ENCODE measurements at regions of chr11 and their contacts with region 1.

Region 1: GRCh38 chr11:103682318-103683184 is 353.9 kb upstream of the DDI1 start:
- DNase-seq: peak in 4 of 5 donors; percentile 45 to 66 (median 61)
- H3K4me3 ChIP-seq: no peak overlapping the region
- H3K4me3 Mint-ChIP-seq: peak overlapping the region in 4 of 8 donors; percentile 10 to 45 (median 37)
- H3K27ac ChIP-seq: no peak overlapping the region
- H3K27ac Mint-ChIP-seq: no peak overlapping the region
- H3K4me1 ChIP-seq: peaks cover 3% of the 10 kb centered on the region
- H3K4me1 Mint-ChIP-seq: peaks cover 5 to 6% (median 5%) of the 10 kb centered on the region in 4 donors
- H3K27me3 ChIP-seq: no peaks in the 10 kb centered on the region
- H3K27me3 Mint-ChIP-seq: peaks cover 0 to 7% of the 10 kb centered on the region in 2 donors

Region 2: DNA sequence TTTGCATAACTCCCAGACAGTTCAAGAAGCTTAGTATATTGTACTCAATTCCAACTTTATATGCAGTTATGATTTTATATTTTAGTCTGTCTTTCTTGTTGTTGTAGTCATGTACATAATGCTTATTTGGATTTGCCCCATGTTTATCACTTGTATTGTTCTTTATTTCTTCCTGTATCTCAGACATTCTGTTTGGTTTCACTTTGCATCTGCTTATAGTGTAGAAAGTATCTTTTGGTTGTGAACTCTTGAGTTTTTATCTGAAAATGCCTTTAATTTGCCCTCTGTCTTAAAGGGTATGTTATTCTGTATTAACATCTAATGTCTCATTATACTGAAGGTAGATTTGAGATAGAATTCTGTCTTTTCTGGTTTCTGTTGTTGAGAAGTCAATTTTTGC is 297.9 kb before region 1 on chr11:
- CTCF ChIA-PET with region 1: no interaction called
- POLR2A ChIA-PET with region 1: no interaction called
- intact Hi-C with region 1: no loop called
- DNase-seq: no peak
- H3K4me3 ChIP-seq: no peak overlapping the region
- H3K4me3 Mint-ChIP-seq: no peak overlapping the region
- H3K27ac ChIP-seq: no peak overlapping the region
- H3K27ac Mint-ChIP-seq: no peak overlapping the region
- H3K4me1 ChIP-seq: no peaks in the 10 kb centered on the region
- H3K4me1 Mint-ChIP-seq: peaks cover 0 to 10% (median 6%) of the 10 kb centered on the region in 4 donors
- H3K27me3 ChIP-seq: no peaks in the 10 kb centered on the region
- H3K27me3 Mint-ChIP-seq: peaks cover 0 to 1% of the 10 kb centered on the region in 2 donors

Region 3: DNA sequence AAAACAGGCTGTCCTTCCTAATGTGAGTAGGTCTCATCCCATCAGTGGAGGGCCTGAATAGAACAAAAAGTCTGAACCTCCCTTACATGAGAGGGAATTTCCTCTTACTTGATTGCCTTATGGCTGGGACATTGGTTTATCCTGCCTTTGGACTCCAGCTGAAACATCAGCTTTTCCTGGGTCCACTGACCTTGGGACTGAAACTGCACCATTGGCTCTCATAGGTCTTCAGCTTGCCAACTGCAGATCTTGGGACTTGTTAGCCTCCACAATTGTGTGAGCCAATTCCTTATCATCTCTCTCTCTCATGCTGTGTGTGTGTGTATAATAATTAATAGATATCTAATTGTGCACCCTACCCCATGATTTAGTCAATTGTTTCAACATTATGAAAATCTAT is 21.4 kb before region 1 on chr11:
- CTCF ChIA-PET with region 1: no interaction called
- POLR2A ChIA-PET with region 1: no interaction called
- intact Hi-C with region 1: no loop called
- DNase-seq: no peak
- H3K4me3 ChIP-seq: no peak overlapping the region
- H3K4me3 Mint-ChIP-seq: no peak overlapping the region
- H3K27ac ChIP-seq: no peak overlapping the region
- H3K27ac Mint-ChIP-seq: no peak overlapping the region
- H3K4me1 ChIP-seq: no peaks in the 10 kb centered on the region
- H3K4me1 Mint-ChIP-seq: peaks cover 0 to 4% (median 2%) of the 10 kb centered on the region in 4 donors
- H3K27me3 ChIP-seq: no peaks in the 10 kb centered on the region
- H3K27me3 Mint-ChIP-seq: no peaks in the 10 kb centered on the region

Region 4: DNA sequence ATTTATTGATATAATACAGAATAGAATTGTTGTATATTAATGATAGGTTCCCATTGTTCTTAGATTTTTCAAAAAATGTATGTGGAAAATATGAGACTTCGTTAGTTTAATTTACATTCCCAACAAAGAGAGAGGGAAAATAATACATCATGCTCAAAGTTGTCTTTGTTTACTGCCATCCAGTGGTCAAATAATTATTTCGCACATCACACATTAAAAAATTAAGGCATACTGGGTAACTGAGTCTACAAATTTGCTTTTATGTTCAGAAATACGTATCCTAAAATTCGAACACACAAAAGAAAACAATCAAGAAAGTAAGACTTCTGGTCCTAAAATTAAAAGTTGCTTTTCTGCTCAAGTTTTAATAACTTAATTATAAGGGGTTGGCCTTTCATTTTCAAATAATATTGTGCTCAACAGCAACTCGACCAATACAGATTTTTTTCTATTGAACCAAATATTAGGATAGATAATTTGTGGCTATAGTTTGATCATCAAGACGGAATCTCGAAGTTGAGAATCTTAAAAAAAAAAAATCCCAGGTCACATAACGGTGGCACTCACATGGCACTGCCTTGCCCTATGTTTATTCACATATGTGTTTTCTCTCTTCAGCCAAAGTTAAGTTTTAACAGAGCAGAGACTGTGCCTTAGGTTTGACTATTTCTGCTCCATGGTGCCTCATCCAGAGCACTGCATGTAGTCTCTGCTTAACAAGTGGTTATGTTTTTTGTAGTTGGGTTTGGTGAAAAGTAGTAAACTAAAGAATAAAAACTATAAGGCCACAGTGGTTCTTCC is 469.1 kb after region 1 on chr11:
- CTCF ChIA-PET with region 1: interaction called, 6 read pairs
- POLR2A ChIA-PET with region 1: no interaction called
- intact Hi-C with region 1: loop called (anchors 2 kb)
- DNase-seq: no peak
- H3K4me3 ChIP-seq: no peak overlapping the region
- H3K4me3 Mint-ChIP-seq: no peak overlapping the region
- H3K27ac ChIP-seq: no peak overlapping the region
- H3K27ac Mint-ChIP-seq: no peak overlapping the region
- H3K4me1 ChIP-seq: no peaks in the 10 kb centered on the region
- H3K4me1 Mint-ChIP-seq: no peaks in the 10 kb centered on the region
- H3K27me3 ChIP-seq: no peaks in the 10 kb centered on the region
- H3K27me3 Mint-ChIP-seq: no peaks in the 10 kb centered on the region

Measured in CD4-positive, alpha-beta memory T cell (primary cell).